Gastrocnemius medialis (tissue), 4 donors: ENCODE measurements at regions of chr2 and their contacts with region 1.

Region 1: DNA sequence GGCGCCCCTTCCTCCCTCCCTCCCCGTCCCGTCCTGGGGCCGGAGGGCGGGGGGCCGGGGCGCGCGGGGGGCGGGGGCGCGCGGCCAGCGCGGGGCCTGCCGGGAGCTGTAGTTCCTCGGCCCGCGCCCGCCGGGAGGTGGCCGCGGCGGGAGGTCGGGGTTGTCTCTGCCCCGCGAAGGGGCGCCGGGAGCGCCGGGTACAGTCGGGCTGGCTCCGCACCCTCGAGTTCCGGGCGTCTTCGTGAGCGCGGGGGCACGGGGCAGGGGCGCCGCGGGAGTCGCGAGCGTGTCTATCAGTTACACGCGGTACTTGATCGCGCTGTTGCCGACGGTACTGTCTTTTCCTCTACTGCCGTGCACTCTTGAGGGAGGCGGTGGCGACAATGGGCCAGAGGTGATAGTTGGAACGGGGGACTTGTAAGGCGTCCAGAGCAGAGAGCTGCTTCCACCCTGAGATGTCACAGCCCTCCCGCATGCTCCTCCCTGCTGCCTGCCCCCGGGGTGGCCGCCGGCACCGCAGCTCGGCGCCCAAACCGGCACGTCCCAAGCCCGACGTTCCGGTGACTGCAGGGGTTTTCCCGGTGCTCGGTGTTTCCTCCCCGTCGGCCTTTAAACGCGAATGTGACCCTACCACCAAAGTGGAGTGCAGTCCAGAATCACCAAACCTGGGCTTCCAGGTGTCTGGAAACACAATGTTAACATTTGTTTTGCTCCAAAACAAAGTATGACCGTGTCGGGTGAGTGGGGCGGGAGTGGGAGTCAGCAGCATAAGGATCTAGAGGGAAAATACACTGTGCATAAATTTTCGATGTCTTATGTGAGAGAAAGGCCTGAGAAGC is at the start of gene PRKD3:
- DNase-seq: peak in 1 of 2 donors; percentile 28
- ATAC-seq: peak; percentile 83 to 84
- H3K4me3 ChIP-seq: peak within 1 kb of the TSS; percentile 71 to 88 (median 80)
- H3K27ac ChIP-seq: peak within 1 kb of the TSS; percentile 79 to 93 (median 90)
- H3K4me1 ChIP-seq: peaks cover 24 to 30% of the 10 kb centered on the region in 2 donors
- H3K27me3 ChIP-seq: no peaks in the 10 kb centered on the region
- CTCF ChIP-seq: no peak
- POLR2A ChIP-seq: peak; percentile 74 to 78
- total RNA-seq, gene PRKD3: 11.0 to 34.4 (median 14.9) TPM

Region 2: DNA sequence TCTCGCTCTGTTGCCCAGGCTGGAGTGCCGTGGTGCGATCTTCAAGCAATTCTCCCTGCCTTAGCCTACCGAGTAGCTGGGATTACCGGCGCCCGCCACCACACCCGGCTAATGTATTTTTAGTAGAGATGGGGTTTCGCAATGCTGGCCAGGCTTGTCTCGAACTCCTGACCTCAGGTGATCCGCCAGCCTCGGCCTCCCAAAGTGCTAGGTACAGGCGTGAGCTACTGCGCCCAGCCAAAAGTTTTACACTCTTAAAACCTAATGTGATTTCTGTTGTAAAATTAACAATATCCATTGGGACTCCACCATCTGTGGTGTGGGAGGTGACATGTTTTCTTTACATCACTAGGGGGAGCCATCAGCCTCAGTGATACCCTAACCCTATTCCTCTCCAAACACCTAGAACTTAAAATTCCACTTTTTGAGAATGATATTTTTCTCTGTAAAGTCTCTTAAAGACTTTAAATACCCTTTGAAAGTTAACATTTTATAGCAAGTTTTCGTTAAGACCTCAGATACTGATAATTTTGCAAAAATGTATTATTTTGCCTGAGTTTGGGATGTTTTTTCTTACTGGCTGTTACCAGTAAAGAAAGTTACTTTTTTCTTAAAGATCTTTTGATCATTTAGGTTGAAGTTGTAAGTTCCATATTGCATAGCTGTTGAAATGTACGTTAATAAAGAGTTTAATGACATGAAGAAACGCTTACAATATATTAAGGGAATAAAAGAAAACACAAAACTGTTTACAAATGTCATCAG is 156.6 kb before region 1 on chr2:
- in situ Hi-C with region 1: no loop called
- intact Hi-C with region 1: no loop called
- DNase-seq: no peak
- ATAC-seq: no peak
- H3K4me3 ChIP-seq: no peak overlapping the region
- H3K27ac ChIP-seq: no peak overlapping the region
- H3K4me1 ChIP-seq: no peaks in the 10 kb centered on the region
- H3K27me3 ChIP-seq: no peaks in the 10 kb centered on the region
- CTCF ChIP-seq: peak in 2 of 5 experiments; percentile 42 to 56
- POLR2A ChIP-seq: no peak

Region 3: GRCh38 chr2:37361216-37361815 is 36.3 kb after region 1 on chr2:
- in situ Hi-C with region 1: no loop called
- intact Hi-C with region 1: loop called (anchors 5 kb)
- DNase-seq: peak; percentile 65 to 66
- ATAC-seq: peak; percentile 71 to 81
- H3K4me3 ChIP-seq: no peak overlapping the region
- H3K27ac ChIP-seq: peak overlapping the region; percentile 67 to 82 (median 70)
- H3K4me1 ChIP-seq: peaks cover 20 to 25% of the 10 kb centered on the region in 2 donors
- H3K27me3 ChIP-seq: no peaks in the 10 kb centered on the region
- CTCF ChIP-seq: no peak
- POLR2A ChIP-seq: no peak

Region 4: GRCh38 chr2:37376421-37377186 is 51.6 kb after region 1 on chr2:
- in situ Hi-C with region 1: no loop called
- intact Hi-C with region 1: loop called (anchors 5 kb)
- DNase-seq: peak; percentile 83 to 87
- ATAC-seq: peak; percentile 95
- H3K4me3 ChIP-seq: peak overlapping the region in 2 of 4 donors; percentile 25 to 34
- H3K27ac ChIP-seq: peak overlapping the region; percentile 78 to 90 (median 82)
- H3K4me1 ChIP-seq: peaks cover 13 to 24% of the 10 kb centered on the region in 2 donors
- H3K27me3 ChIP-seq: no peaks in the 10 kb centered on the region
- CTCF ChIP-seq: no peak
- POLR2A ChIP-seq: no peak